Esophagus muscularis mucosa (tissue), 4 donors: ENCODE measurements at regions of chr4 and their contacts with region 1.

Region 1: GRCh38 chr4:55948726-55949474 is at the start of gene CEP135:
- DNase-seq: peak; percentile 97
- H3K4me3 ChIP-seq: peak within 1 kb of the TSS; percentile 81 to 86 (median 84)
- H3K27ac ChIP-seq: peak within 1 kb of the TSS; percentile 86 to 91 (median 88)
- H3K4me1 ChIP-seq: peaks cover 15 to 28% (median 23%) of the 10 kb centered on the region in 4 donors
- H3K27me3 ChIP-seq: no peaks in the 10 kb centered on the region
- CTCF ChIP-seq: peak; percentile 83 to 95 (median 93)
- EP300 ChIP-seq: no peak
- POLR2A ChIP-seq: no peak
- total RNA-seq, gene CEP135: 3.5 to 5.0 (median 3.8) TPM

Region 2: GRCh38 chr4:56301181-56302076 is 352.5 kb after region 1 on chr4:
- intact Hi-C with region 1: loop called (anchors 2 kb)
- DNase-seq: no peak
- H3K4me3 ChIP-seq: no peak overlapping the region
- H3K27ac ChIP-seq: no peak overlapping the region
- H3K4me1 ChIP-seq: peaks cover 0 to 11% (median 8%) of the 10 kb centered on the region in 4 donors
- H3K27me3 ChIP-seq: no peaks in the 10 kb centered on the region
- CTCF ChIP-seq: peak; percentile 75 to 92 (median 77)
- EP300 ChIP-seq: no peak
- POLR2A ChIP-seq: no peak